A673 (cell line): ENCODE measurements at regions of chr3 and their contacts with region 1.

Region 1: GRCh38 chr3:51974963-51975851 is at the start of gene ABHD14A:
- DNase-seq: peak; percentile 55
- H3K4me3 ChIP-seq: peak within 1 kb of the TSS; percentile 63
- H3K27ac ChIP-seq: no peak within 1 kb of the TSS
- H3K4me1 ChIP-seq: peaks cover 8% of the 10 kb centered on the region
- H3K27me3 ChIP-seq: no peaks in the 10 kb centered on the region
- CTCF ChIP-seq: no peak
- total RNA-seq, gene ABHD14A: 3.7 and 5.6 TPM in 2 replicates

Region 2: GRCh38 chr3:51941798-51942602 is 33.2 kb before region 1 on chr3 and contains the starts of genes PARP3 and RRP9:
- CTCF ChIA-PET with region 1: no interaction called
- POLR2A ChIA-PET with region 1: no interaction called
- intact Hi-C with region 1: loop called (anchors 2 kb)
- DNase-seq: peak; percentile 99
- H3K4me3 ChIP-seq: peak within 1 kb of the TSS; percentile 70
- H3K27ac ChIP-seq: peak within 1 kb of the TSS; percentile 74
- H3K4me1 ChIP-seq: peaks cover 6% of the 10 kb centered on the region
- H3K27me3 ChIP-seq: no peaks in the 10 kb centered on the region
- CTCF ChIP-seq: peak; percentile 93
- total RNA-seq, gene PARP3: 3.4 and 4.0 TPM in 2 replicates
- total RNA-seq, gene RRP9: 25.9 and 32.3 TPM in 2 replicates